Mucosa of descending colon (tissue), 3 donors: ENCODE measurements at regions of chr6 and their contacts with region 1.

Region 1: DNA sequence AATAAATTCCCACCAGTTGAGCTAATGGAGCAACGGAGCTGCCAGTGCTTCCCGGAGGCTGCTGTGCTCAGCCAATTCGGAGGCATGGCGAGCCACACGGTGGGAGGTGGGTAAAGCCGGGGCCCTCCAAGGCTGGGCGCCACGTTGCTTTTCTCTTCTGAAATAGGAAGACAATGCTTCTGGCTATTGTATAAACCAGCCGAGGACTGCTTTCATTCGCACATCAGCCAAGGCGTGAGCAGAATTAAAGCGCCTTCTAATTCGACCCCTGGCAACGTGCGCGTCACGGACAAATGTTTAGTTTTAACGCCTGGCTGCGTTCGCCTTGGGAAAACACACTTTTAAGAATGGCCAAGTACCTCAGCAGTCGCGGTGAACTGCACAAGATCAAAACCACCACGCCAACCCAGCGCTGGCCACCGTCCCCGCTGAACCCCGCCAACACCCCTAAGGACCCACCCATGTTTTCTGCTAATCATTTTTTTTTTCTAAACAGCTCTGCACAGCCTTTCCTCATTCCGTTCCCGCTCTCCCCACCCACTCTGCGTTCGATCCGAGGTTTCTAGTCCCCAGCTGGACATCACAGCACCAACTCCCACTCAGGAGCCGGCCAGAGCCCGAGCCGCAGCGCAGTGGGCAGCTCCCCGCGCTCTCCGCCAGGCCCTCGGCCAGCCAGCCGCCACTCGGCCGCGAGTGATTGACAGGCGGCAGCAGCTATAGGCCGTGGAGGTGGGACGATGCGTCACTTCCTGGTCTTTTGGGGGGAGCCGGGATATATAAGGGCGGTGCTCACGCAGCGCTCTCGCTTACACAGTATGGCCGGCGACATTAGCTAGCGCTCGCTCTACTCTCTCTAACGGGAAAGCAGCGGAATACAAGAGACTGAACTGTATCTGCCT is at the start of gene AMD1:
- DNase-seq: peak; percentile 96 to 99 (median 98)
- ATAC-seq: peak; percentile 82
- H3K4me3 ChIP-seq: peak within 1 kb of the TSS; percentile 88
- H3K4me1 ChIP-seq: peaks cover 26% of the 10 kb centered on the region
- CTCF ChIP-seq: no peak
- total RNA-seq, gene AMD1: 44.9 to 75.9 (median 72.8) TPM

Region 2: DNA sequence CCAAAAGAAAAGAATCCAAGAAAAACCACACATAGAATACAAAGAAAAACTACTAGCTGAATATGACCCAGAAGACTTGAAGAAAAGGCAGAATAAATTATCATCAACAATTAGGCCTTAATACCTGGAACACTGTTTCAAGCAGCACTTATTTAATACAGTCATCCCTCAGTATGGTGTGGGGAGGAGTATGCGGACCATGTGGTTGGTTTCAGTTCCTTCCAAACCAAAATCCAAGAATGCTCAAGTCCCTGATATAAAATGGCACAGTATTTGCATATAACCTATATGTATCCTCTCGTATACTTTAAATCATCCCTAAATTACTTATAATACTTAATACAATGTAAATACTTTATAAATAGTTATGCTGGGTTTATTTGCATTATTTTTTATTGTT is 75.0 kb before region 1 on chr6:
- intact Hi-C with region 1: no loop called
- DNase-seq: no peak
- ATAC-seq: no peak
- H3K4me3 ChIP-seq: no peak overlapping the region
- H3K4me1 ChIP-seq: no peaks in the 10 kb centered on the region
- CTCF ChIP-seq: no peak

Region 3: GRCh38 chr6:110815217-110816109 is 58.8 kb before region 1 on chr6 and contains the start of gene CDK19:
- intact Hi-C with region 1: loop called (anchors 5 to 10 kb)
- DNase-seq: peak; percentile 98 to 99 (median 99)
- ATAC-seq: peak; percentile 92
- H3K4me3 ChIP-seq: peak within 1 kb of the TSS; percentile 84
- H3K4me1 ChIP-seq: peaks cover 16% of the 10 kb centered on the region
- CTCF ChIP-seq: no peak
- total RNA-seq, gene CDK19: 24.3 to 34.3 (median 27.7) TPM

Region 4: DNA sequence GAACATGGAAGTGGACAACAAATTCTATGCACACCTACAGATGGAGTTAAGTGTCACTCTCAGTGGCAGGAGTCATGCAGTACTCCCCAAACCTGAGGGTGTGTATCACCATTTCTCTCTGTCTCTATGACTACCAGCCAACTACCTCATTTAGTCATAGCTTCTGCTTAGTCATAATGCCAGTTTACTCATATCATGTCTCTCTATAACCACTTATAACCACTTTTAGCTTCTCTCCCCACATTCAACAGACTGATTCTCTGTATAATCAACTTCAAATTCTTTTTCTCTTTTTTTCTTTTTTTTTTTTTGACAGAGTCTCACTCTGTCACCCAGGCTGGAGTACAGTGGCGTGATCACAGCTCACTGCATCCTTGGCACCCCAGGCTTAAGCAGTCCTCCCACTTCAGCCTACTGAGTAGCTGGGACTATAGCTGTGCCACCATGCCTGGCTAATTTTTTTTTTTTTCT is 70.5 kb after region 1 on chr6:
- intact Hi-C with region 1: no loop called
- DNase-seq: no peak
- ATAC-seq: peak; percentile 79
- H3K4me3 ChIP-seq: no peak overlapping the region
- H3K4me1 ChIP-seq: no peaks in the 10 kb centered on the region
- CTCF ChIP-seq: no peak